Heart left ventricle (tissue), 16 donors: ENCODE measurements at regions of chr16 and their contacts with region 1.

Region 1: DNA sequence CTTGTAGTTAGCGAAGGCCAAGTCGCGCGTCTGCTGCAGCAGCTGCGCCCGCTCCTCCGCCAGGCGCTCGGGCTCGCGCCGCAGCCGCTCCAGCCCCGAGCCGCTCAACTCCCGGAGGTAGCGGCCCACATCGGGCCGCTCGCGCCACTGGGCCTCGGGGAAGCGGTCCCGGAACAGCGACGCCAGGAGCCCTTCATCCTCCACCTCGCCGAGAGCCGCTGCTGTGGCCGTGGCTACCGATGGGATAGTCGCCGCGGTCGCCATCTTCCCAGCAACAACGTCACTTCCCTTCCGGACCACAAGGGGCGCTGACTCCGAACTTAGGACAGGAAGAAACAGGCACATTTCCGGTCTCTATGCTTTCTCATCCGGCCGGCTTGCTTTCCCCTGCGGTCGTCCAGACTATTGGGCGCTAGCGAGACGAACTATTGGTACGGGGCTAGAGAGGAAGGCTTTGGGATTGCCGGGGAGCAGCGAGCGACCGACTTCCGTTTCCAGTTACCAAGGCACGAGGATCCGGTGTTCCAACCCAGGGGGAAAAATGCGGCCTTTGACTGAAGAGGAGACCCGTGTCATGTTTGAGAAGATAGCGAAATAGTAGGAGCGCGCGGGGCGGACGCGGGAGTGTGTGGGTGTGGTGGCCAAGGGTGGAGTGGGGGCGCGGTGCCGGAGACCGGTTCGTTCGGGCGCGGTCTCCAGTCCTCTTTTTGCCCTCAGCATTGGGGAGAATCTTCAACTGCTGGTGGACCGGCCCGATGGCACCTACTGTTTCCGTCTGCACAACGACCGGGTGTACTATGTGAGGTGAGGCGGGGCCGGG is at the starts of genes COG8 and NIP7:
- DNase-seq: peak; percentile 94 to 96 (median 96)
- ATAC-seq: peak; percentile 98 to 100 (median 99)
- H3K4me3 ChIP-seq: peak within 1 kb of the TSS; percentile 69 to 100 (median 88)
- H3K27ac ChIP-seq: peak within 1 kb of the TSS; percentile 28 to 96 (median 92)
- H3K4me1 ChIP-seq: peaks cover 7 to 33% (median 24%) of the 10 kb centered on the region in 12 donors
- H3K27me3 ChIP-seq: no peaks in the 10 kb centered on the region
- CTCF ChIP-seq: peak; percentile 79 to 93 (median 86)
- POLR2A ChIP-seq: peak in 1 of 2 donors; percentile 52
- total RNA-seq, gene COG8: 19.7 to 43.0 (median 26.5) TPM
- total RNA-seq, gene NIP7: 5.4 to 13.9 (median 10.3) TPM

Region 2: GRCh38 chr16:69310653-69311532 is 28.6 kb before region 1 on chr16 and contains the start of gene VPS4A:
- intact Hi-C with region 1: loop called in 1 of 10 experiments (anchors 2 kb)
- DNase-seq: peak; percentile 95 to 98 (median 96)
- ATAC-seq: peak; percentile 92 to 99 (median 97)
- H3K4me3 ChIP-seq: peak within 1 kb of the TSS; percentile 75 to 100 (median 96)
- H3K27ac ChIP-seq: peak within 1 kb of the TSS; percentile 84 to 95 (median 91)
- H3K4me1 ChIP-seq: peaks cover 0 to 41% (median 23%) of the 10 kb centered on the region in 12 donors
- H3K27me3 ChIP-seq: no peaks in the 10 kb centered on the region
- CTCF ChIP-seq: peak; percentile 70 to 97 (median 90)
- POLR2A ChIP-seq: peak in 1 of 2 donors; percentile 73
- total RNA-seq, gene VPS4A: 24.8 to 46.9 (median 28.4) TPM